ENCODE measurements at regions of chr7 and their contacts with region 1.

Region 1: GRCh38 chr7:12686894-12687717 is at the start of gene ARL4A:
- DNase-seq: peak; percentile 70 to 94 (median 87)
- ATAC-seq: peak; percentile 41
- H3K4me3 ChIP-seq: peak within 1 kb of the TSS; percentile 94
- H3K4me3 Mint-ChIP-seq: peak within 1 kb of the TSS; percentile 92
- H3K27ac ChIP-seq: peak within 1 kb of the TSS; percentile 97 to 99
- H3K27ac Mint-ChIP-seq: peak within 1 kb of the TSS; percentile 93
- H3K4me1 ChIP-seq: no peaks in the 10 kb centered on the region
- H3K4me1 Mint-ChIP-seq: peaks cover 27% of the 10 kb centered on the region
- H3K27me3 ChIP-seq: no peaks in the 10 kb centered on the region
- H3K27me3 Mint-ChIP-seq: no peaks in the 10 kb centered on the region
- CTCF ChIP-seq: peak; percentile 44
- total RNA-seq, gene ARL4A: 48.6 to 56.2 TPM

Region 2: GRCh38 chr7:12638851-12639467 is 48.1 kb before region 1 on chr7:
- CTCF ChIA-PET with region 1: interaction called, 6 read pairs
- POLR2A ChIA-PET with region 1: no interaction called
- intact Hi-C with region 1: loop called in 1 of 2 experiments (anchors 2 kb)
- DNase-seq: peak in 2 of 9 experiments; percentile 51 to 64
- ATAC-seq: peak; percentile 40
- H3K4me3 ChIP-seq: no peak overlapping the region
- H3K4me3 Mint-ChIP-seq: no peak overlapping the region
- H3K27ac ChIP-seq: no peak overlapping the region
- H3K27ac Mint-ChIP-seq: no peak overlapping the region
- H3K4me1 ChIP-seq: no peaks in the 10 kb centered on the region
- H3K4me1 Mint-ChIP-seq: peaks cover 16% of the 10 kb centered on the region
- H3K27me3 ChIP-seq: no peaks in the 10 kb centered on the region
- H3K27me3 Mint-ChIP-seq: peaks cover 2% of the 10 kb centered on the region
- CTCF ChIP-seq: peak; percentile 90

Region 3: DNA sequence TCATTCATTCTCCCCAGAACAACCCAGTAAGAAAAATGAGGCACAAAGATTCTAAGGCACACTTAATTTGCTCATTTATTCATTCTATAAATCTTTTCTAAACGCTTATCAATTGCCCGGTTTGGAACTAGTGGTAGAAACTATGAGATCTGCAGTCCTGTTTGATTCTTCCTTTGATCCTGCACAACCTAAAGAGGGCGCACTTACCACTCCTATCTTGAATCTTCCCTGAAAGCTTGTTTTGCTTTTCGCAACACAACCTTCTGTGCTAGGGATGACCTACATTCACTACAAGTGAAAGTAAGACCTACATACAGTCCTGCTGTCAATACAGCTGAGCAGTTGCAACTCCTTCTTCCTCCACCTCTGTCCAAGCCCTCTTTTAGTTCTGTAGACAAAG is 12.3 kb before region 1 on chr7:
- CTCF ChIA-PET with region 1: interaction called, 19 read pairs
- POLR2A ChIA-PET with region 1: no interaction called
- intact Hi-C with region 1: loop called in 1 of 2 experiments (anchors 1 kb)
- DNase-seq: peak in 8 of 9 experiments; percentile 13 to 81 (median 32)
- ATAC-seq: peak; percentile 92
- H3K4me3 ChIP-seq: no peak overlapping the region
- H3K4me3 Mint-ChIP-seq: no peak overlapping the region
- H3K27ac ChIP-seq: no peak overlapping the region
- H3K27ac Mint-ChIP-seq: peak overlapping the region; percentile 65
- H3K4me1 ChIP-seq: no peaks in the 10 kb centered on the region
- H3K4me1 Mint-ChIP-seq: peaks cover 8% of the 10 kb centered on the region
- H3K27me3 ChIP-seq: peaks cover 0 to 2% of the 10 kb centered on the region in 2 experiments
- H3K27me3 Mint-ChIP-seq: no peaks in the 10 kb centered on the region
- CTCF ChIP-seq: no peak

Region 4: GRCh38 chr7:12731214-12731656 is 44.1 kb after region 1 on chr7:
- CTCF ChIA-PET with region 1: interaction called, 4 read pairs
- POLR2A ChIA-PET with region 1: no interaction called
- intact Hi-C with region 1: loop called in 1 of 2 experiments (anchors 2 kb)
- DNase-seq: peak in 5 of 9 experiments; percentile 6 to 54 (median 18)
- ATAC-seq: no peak
- H3K4me3 ChIP-seq: no peak overlapping the region
- H3K4me3 Mint-ChIP-seq: peak overlapping the region; percentile 55
- H3K27ac ChIP-seq: no peak overlapping the region
- H3K27ac Mint-ChIP-seq: peak overlapping the region; percentile 19
- H3K4me1 ChIP-seq: peaks cover 16% of the 10 kb centered on the region
- H3K4me1 Mint-ChIP-seq: peaks cover 17% of the 10 kb centered on the region
- H3K27me3 ChIP-seq: no peaks in the 10 kb centered on the region
- H3K27me3 Mint-ChIP-seq: peaks cover 2% of the 10 kb centered on the region
- CTCF ChIP-seq: no peak